Panc1 (cell line): ENCODE measurements at regions of chr17 and their contacts with region 1.

Region 1: DNA sequence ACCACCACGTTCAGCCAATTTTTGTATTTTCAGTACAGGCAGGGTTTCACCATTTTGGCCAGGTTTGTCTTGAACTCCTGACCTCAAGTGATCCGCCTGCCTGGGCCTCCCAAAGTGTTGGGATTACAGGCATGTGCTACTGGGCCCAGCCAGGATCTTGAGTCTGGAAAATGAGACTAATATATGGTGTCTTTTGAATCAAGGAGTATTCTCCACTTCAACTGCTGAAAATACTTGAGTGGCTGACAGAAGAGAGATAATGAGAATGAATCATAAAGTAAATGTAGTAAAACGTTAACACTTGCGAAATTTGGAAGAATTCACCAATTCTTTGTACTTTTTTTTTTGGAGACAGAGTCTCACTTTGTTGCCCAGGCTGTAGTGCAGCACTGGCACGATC is 16.6 kb downstream of the SMYD4 start:
- DNase-seq: no peak
- ATAC-seq: no peak
- H3K4me3 ChIP-seq: no peak overlapping the region
- H3K27ac ChIP-seq: no peak overlapping the region
- H3K4me1 ChIP-seq: no peaks in the 10 kb centered on the region
- H3K27me3 ChIP-seq: no peaks in the 10 kb centered on the region
- CTCF ChIP-seq: no peak

Region 2: GRCh38 chr17:1829216-1829591 is 16.1 kb after region 1 on chr17:
- CTCF ChIA-PET with region 1: no interaction called
- POLR2A ChIA-PET with region 1: interaction called, 11 read pairs
- in situ Hi-C with region 1: no loop called
- intact Hi-C with region 1: no loop called
- DNase-seq: no peak
- ATAC-seq: peak; percentile 28
- H3K4me3 ChIP-seq: peak overlapping the region; percentile 90 to 93
- H3K27ac ChIP-seq: peak overlapping the region; percentile 76
- H3K4me1 ChIP-seq: peaks cover 4% of the 10 kb centered on the region; the same call in 1 of the 2 replicates
- H3K27me3 ChIP-seq: no peaks in the 10 kb centered on the region
- CTCF ChIP-seq: no peak